GM10248 (cell line): ENCODE measurements at regions of chr2 and their contacts with region 1.

Region 1: GRCh38 chr2:64978514-64979268 is 10.5 kb upstream of the SLC1A4 start:
- DNase-seq: no peak
- CTCF ChIP-seq: no peak

Region 2: DNA sequence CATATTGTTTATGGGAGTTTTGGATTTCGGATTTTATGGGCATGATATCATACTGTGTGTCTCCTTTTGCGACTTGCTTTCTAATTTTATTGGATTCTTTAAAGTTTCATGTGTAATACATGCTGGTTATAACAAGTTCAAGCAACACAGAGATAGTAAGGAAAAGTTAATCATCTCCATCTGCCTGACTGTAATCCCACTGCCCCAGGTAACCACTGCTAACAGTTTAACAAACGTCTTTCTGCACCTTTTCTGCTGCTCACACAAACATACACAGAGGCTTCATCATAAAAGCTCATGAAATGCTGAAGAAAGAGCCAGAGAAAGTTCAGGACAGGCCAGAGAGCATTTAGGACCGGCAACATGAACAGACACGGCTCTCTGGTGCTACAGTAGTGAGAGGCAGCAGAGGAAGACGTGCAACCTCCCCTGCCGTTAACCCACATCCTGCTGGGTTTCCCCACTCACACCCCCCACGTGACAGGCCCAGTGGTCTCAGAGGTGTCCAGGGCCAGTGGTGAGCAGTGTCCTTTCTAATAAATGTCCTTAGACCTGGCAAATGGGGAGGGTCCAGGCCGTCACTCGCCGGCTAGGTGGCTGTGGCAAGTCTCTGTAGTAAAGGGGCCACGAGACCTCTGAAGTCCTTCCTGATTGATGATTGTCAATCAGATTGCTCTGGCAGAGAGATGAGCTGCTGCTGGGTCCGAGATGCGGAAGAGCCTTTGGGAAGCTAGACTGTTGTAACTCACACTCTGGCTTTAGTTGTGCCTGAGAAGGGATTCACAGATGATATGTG is 32.5 kb before region 1 on chr2:
- CTCF ChIA-PET with region 1: interaction called, 19 read pairs
- POLR2A ChIA-PET with region 1: no interaction called
- DNase-seq: peak; percentile 80
- CTCF ChIP-seq: no peak

Region 3: DNA sequence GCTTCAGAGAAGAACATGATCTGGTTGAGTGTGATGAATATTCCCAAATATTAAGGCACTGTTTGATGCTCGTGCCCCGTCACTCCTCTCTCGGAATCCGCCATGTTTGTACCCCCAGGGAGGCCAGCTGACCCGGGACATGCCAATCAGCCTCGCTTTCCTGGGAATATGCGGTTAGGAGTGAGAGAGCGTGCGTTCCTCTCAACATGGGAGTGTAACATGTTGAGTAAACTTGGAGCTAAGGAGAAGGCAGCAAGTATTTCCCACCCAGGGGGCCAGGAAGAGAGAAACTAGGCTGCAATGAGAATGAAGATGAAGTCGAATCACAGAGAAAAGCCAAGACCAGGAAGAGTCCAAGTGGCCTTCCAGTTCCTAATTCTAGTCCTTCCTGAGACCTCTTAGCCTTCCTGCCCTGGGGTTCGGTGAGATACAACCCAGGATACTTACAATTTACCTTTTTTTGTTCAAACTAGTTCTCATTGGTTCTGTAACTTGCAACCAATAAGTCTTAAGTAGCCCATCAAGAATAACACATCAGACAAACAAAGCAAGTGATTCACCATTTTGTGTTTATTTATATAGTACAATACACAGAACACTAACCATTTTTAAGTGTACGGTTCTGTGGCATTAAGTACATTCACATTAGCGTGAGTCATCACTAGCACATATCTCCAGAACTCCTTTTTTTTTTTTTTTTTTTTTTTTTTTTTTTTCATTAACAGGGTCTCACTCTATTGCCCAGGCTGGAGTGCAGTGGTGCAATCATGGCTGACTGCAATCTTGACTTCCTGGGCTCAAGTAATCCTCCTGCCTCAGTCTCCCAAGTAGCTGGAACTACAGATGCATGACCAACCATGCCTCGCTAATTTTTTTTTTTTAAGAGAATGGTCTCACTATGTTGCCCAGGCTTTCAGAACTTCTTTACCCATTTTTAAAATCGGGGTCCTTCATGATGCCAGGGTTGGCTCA is 25.9 kb before region 1 on chr2:
- CTCF ChIA-PET with region 1: interaction called, 10 read pairs
- POLR2A ChIA-PET with region 1: no interaction called
- DNase-seq: no peak
- CTCF ChIP-seq: no peak